ENCODE measurements at regions of chr6 and their contacts with region 1.

Region 1: DNA sequence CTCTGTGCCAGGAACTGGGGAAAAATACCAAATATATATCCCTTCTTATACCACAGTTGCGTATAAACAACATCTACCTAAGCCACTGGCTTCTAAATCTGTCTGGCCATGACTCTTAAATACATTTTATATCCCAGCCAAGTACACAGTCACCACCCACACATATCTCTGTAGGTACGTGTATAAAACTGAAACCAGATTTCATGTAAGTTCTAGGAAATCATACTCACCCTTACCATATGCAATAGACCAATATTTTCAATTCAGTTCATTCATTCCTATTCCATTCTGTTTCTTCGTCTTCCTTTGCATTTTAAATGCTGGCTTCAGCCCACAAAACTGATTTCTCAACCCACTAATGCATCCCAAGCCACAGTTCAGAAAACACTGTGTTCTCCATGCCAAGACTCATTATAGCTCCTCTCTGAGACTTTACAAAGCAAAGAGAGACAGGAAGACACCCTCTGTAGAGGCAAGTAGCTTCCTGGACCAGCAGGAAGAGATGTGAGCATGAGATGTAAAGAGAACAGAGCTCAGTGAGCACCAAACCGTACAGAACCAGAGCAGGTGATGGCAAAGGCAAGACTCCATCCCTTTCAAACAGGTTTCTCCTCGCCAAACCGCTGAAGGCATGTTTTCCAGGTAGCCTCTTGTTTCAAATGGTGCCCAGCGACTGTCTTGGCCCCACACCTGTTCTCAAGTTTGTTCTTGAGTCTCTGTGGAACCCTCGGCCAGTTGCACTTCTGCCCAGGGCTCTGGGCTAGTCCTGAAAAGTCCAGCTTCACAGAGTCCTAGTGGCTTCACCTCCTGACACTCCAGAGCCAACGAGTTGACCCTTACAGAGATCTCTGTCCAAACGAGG is 18.7 kb downstream of the FAM50B start:
- DNase-seq: no peak
- ATAC-seq: no peak
- H3K4me3 ChIP-seq: no peak overlapping the region
- H3K27ac ChIP-seq: no peak overlapping the region
- H3K4me1 ChIP-seq: peaks cover 9% of the 10 kb centered on the region
- H3K27me3 ChIP-seq: no peaks in the 10 kb centered on the region
- CTCF ChIP-seq: no peak

Region 2: DNA sequence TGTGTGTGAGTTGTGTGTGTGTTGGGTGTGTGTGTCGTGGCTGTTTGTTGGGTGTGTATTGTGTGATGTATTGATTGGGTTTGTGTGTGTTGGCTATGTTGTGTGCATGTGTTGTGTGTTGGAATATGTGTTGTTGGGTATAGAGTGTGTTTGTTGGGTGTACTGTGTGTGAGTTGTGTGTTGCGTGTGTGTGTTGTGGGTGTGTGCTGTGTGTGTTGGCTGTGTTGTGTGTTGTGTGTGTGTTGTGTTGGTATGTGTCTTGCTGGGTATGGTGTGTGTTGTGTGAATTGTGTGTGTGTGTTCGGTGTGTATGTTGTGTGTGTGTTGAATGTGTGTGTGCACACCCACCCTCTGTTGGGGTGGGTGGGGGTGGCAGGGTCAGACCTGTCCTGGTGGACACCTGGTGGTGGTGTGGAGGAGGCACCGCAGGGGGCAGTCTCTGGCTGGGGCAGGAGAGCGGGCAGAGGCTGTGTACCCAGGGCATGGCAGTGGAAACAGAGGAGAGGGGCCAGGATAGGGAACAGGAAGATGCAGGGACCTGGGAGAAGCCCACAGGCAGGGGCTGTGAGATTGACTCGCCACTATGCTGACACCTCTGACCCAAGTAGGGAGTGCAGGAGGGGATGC is 90.9 kb before region 1 on chr6:
- CTCF ChIA-PET with region 1: no interaction called
- POLR2A ChIA-PET with region 1: no interaction called
- intact Hi-C with region 1: no loop called
- DNase-seq: no peak
- ATAC-seq: no peak
- H3K4me3 ChIP-seq: no peak overlapping the region
- H3K27ac ChIP-seq: no peak overlapping the region
- H3K4me1 ChIP-seq: no peaks in the 10 kb centered on the region
- H3K27me3 ChIP-seq: no peaks in the 10 kb centered on the region
- CTCF ChIP-seq: peak; percentile 26; the same call in 1 of the 2 replicates

Region 3: GRCh38 chr6:3825851-3826581 is 41.9 kb before region 1 on chr6:
- CTCF ChIA-PET with region 1: no interaction called
- POLR2A ChIA-PET with region 1: no interaction called
- intact Hi-C with region 1: no loop called
- DNase-seq: peak; percentile 97
- ATAC-seq: peak; percentile 94
- H3K4me3 ChIP-seq: peak overlapping the region; percentile 38; the same call in 1 of the 2 replicates
- H3K27ac ChIP-seq: peak overlapping the region; percentile 84
- H3K4me1 ChIP-seq: peaks cover 45% of the 10 kb centered on the region
- H3K27me3 ChIP-seq: no peaks in the 10 kb centered on the region
- CTCF ChIP-seq: no peak

Region 4: DNA sequence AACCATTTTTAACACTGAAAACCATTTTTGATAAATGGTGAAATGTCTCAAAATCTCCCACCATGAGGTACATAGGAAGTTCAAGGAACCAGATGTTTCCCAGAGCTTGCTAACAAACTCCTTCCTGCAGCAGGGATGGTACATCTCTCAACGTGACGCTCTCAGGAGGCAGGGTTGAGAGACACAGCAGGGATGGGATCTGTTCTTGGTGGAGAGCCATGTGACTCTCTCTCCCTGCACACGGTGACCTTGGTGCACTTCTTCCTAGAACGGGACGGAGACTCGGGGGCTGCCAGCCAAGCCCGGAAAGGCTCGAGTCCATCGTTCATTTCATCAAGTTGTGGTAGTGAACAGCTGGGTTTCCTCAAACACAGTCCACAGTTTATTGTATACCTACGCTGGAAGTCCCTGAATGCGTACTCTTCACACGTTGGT is 75.5 kb after region 1 on chr6:
- CTCF ChIA-PET with region 1: no interaction called
- POLR2A ChIA-PET with region 1: interaction called, 11 read pairs
- intact Hi-C with region 1: no loop called
- DNase-seq: no peak
- ATAC-seq: no peak
- H3K4me3 ChIP-seq: no peak overlapping the region
- H3K27ac ChIP-seq: no peak overlapping the region
- H3K4me1 ChIP-seq: peaks cover 12% of the 10 kb centered on the region
- H3K27me3 ChIP-seq: no peaks in the 10 kb centered on the region
- CTCF ChIP-seq: no peak

Region 5: GRCh38 chr6:3962957-3963303 is 95.1 kb after region 1 on chr6:
- CTCF ChIA-PET with region 1: no interaction called
- POLR2A ChIA-PET with region 1: no interaction called
- intact Hi-C with region 1: no loop called
- DNase-seq: peak; percentile 43
- ATAC-seq: no peak
- H3K4me3 ChIP-seq: no peak overlapping the region
- H3K27ac ChIP-seq: no peak overlapping the region
- H3K4me1 ChIP-seq: peaks cover 8% of the 10 kb centered on the region; the same call in 1 of the 2 replicates
- H3K27me3 ChIP-seq: no peaks in the 10 kb centered on the region
- CTCF ChIP-seq: no peak